ENCODE measurements at regions of chrX and their contacts with region 1.

Region 1: DNA sequence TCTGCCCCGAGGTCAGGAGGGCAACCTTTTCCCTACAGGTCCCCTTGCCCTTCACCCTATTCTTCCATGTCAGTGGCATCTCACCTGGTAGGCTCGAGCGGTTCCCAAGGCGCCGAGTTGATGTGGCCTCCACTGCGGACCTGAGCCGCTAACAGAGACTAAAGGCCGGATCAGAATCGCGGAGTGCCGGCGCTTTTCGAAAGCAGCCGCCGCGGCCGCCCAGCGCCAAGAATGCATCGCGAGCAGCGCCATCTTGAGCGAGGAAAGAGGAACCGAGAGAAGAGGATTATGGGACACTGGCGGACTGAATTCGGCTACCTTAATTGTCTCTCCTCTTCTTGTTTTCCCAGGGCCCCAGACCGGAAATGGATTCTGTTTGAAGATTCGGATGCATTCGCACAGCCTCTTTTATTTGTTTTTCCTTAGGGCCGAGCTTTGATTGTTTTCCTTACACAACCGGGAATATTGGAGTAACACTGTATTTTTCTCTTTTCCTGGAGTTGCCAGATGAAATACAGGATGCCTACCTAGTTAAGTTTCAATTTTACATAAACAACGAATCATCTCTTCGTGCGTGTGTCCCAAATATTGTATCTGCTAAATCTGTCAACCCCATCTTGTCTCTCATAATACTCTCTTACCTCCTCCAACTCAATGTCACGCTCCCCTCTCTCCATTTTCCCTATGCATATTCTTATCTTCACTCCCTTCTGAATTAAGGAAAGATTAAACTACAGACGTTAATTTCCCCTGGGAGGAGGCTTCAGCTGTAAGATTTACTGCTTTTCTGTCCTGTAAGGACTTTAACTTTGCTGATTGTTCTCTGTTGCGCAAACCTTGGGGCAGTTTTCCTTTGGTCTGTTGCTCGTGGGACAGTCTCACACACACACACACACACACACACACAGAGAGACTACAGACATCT is at the start of gene ABCB7:
- DNase-seq: peak; percentile 68
- H3K4me3 Mint-ChIP-seq: peak within 1 kb of the TSS; percentile 99
- H3K27ac Mint-ChIP-seq: peak within 1 kb of the TSS; percentile 96
- H3K4me1 Mint-ChIP-seq: peaks cover 45% of the 10 kb centered on the region
- H3K27me3 Mint-ChIP-seq: no peaks in the 10 kb centered on the region
- total RNA-seq, gene ABCB7: 46.8 to 47.6 TPM

Region 2: DNA sequence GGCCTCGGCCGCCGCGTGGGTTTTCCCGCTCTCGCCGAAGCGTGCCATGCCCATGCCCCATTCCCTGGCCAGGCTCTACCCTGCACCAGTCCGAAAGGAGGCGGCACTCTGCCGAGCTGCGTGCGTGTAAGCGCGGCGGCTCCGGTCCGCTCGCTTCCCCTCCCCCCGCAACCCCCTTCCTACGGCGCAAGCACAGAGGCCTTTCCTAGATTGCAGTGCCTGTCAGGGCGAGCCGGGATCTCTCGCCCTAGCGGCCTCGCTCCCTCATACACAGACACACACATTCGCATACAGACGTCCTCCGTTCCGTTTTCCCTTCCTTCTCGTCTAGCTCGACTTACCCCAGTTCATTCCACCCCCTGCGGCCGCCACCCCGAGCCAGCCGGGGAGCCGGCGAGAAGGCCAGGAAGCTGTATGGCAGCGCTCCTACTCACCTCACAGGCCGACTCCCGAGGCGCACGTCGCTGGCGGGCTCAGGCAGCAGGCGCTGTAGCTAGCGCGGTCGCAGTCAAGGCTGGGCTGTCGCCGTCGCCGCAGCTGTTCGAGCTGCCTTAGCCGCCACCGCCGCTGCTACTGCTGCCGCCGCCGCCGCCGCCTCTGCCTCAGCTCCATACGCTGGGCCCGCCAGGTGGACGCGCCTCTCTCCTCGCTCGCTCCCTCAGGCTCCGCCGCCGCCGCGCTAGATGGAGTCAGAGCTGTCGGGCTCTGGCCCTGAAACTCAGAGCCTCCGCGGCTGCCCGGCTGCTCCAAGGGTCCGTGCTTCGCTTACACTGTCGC is 231.6 kb before region 1 on chrX:
- CTCF ChIA-PET with region 1: no interaction called
- intact Hi-C with region 1: loop called (anchors 2 kb)
- DNase-seq: peak; percentile 47
- H3K4me3 Mint-ChIP-seq: peak overlapping the region; percentile 95
- H3K27ac Mint-ChIP-seq: peak overlapping the region; percentile 87
- H3K4me1 Mint-ChIP-seq: peaks cover 6% of the 10 kb centered on the region
- H3K27me3 Mint-ChIP-seq: peaks cover 5% of the 10 kb centered on the region

Region 3: DNA sequence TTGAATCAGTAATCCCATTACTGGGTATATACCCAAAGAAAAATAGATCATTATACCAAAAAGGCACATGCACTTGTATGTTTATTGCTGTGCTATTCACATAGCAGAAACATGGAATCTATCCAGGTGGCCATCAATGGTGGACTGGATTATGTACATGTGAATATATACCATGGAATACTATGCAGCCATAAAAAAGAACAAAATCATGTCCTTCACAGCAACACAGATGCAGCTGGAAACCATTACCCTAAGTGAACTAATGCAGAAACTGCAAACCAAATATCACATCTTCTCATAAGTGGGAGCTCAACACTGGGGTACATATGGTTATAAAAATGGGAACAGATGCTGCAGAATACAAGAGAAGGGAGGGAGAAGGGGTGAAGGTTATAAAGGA is 110.9 kb before region 1 on chrX:
- CTCF ChIA-PET with region 1: no interaction called
- intact Hi-C with region 1: no loop called
- DNase-seq: no peak
- H3K4me3 Mint-ChIP-seq: no peak overlapping the region
- H3K27ac Mint-ChIP-seq: no peak overlapping the region
- H3K4me1 Mint-ChIP-seq: no peaks in the 10 kb centered on the region
- H3K27me3 Mint-ChIP-seq: no peaks in the 10 kb centered on the region

Region 4: GRCh38 chrX:75096331-75096730 is 60.0 kb before region 1 on chrX:
- CTCF ChIA-PET with region 1: no interaction called
- intact Hi-C with region 1: loop called (anchors 5 kb)
- DNase-seq: no peak
- H3K4me3 Mint-ChIP-seq: no peak overlapping the region
- H3K27ac Mint-ChIP-seq: no peak overlapping the region
- H3K4me1 Mint-ChIP-seq: peaks cover 15% of the 10 kb centered on the region
- H3K27me3 Mint-ChIP-seq: no peaks in the 10 kb centered on the region

Region 5: GRCh38 chrX:75229774-75230173 is 73.5 kb after region 1 on chrX:
- CTCF ChIA-PET with region 1: no interaction called
- intact Hi-C with region 1: no loop called
- DNase-seq: no peak
- H3K4me3 Mint-ChIP-seq: no peak overlapping the region
- H3K27ac Mint-ChIP-seq: no peak overlapping the region
- H3K4me1 Mint-ChIP-seq: no peaks in the 10 kb centered on the region
- H3K27me3 Mint-ChIP-seq: no peaks in the 10 kb centered on the region

Region 6: DNA sequence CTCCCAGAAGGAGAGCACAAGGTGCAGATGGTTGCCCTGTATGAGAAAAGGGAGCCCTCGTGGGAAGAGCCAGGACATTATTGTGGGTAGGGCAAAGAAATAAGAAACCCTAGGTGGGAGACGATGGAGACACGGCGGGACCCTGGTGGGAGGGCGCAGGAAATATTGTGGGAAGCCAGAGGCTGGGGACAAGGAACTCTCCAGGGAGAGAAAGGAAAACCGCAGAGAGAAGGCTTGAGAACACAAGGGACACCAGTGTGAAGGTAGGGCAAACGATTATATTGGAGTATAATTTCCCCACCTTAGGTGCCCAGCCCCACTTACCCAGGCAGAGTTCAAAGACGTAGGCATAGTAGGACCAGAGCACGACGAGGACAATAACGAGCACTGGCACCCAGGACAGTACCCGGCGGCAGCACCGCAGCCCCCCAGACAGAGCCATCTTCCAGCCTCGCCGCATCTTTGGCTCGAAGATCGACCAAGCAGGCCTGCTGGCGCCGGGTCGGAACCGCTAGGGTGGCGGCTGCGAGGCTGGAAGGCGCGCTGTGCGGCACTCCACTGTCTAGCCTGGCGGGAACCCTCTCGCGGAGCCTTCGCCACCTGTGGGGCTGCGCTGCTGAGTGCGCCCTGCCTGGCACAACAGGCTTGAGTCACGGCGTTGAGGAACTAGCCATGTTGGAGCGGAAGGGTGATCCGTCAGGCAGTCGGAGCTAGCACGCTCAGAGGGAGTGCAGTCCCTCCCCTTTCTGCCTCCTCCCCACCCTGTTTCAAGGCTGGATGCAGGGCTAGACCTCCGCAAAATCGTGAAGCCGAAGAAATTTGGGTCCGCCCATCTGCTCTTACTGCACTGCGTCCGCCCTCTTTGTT is 366.5 kb after region 1 on chrX and contains the start of gene ZDHHC15:
- CTCF ChIA-PET with region 1: no interaction called
- intact Hi-C with region 1: loop called (anchors 2 kb)
- DNase-seq: peak; percentile 68
- H3K4me3 Mint-ChIP-seq: peak within 1 kb of the TSS; percentile 80
- H3K27ac Mint-ChIP-seq: peak within 1 kb of the TSS; percentile 70
- H3K4me1 Mint-ChIP-seq: peaks cover 26% of the 10 kb centered on the region
- H3K27me3 Mint-ChIP-seq: no peaks in the 10 kb centered on the region
- total RNA-seq, gene ZDHHC15: 0.17 to 0.21 TPM

Measured in activated naive CD4-positive, alpha-beta T cell treated with anti-CD3 and anti-CD28 coated beads for 36 hours (primary cell).